ENCODE measurements at regions of chr11 and their contacts with region 1.

Region 1: GRCh38 chr11:4636962-4637661 is at the start of gene OR51D1:
- DNase-seq: peak; percentile 40 to 90 (median 78)

Region 2: GRCh38 chr11:4704054-4704789 is 67.1 kb after region 1 on chr11 and contains the start of gene MMP26:
- intact Hi-C with region 1: no loop called
- DNase-seq: no peak

Region 3: DNA sequence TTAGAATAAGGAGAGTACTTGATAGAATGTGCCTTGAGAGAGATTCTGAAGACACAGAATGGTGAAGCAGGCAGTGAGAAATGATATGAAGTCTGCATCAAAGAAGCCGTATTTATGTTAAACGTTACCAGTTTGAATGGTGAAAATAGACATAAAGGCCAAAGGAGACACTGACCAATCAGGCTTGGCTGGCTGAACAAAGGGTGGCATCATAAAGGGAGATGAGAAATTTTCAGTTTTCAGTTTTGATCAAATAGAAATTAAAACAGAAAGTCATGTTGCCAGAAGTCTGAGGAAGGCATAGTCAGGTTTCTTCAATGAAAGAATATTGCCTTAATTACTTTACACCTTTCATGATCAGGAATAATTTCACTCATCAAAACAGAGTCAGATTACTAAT is 126.0 kb after region 1 on chr11:
- intact Hi-C with region 1: no loop called
- DNase-seq: no peak

Region 4: GRCh38 chr11:5004424-5005274 is 367.5 kb after region 1 on chr11:
- intact Hi-C with region 1: loop called (anchors 10 kb)
- DNase-seq: peak; percentile 16 to 82 (median 60)

Measured in head of caudate nucleus (tissue), 42 donors.